ENCODE measurements at regions of chr2 and their contacts with region 1.

Region 1: DNA sequence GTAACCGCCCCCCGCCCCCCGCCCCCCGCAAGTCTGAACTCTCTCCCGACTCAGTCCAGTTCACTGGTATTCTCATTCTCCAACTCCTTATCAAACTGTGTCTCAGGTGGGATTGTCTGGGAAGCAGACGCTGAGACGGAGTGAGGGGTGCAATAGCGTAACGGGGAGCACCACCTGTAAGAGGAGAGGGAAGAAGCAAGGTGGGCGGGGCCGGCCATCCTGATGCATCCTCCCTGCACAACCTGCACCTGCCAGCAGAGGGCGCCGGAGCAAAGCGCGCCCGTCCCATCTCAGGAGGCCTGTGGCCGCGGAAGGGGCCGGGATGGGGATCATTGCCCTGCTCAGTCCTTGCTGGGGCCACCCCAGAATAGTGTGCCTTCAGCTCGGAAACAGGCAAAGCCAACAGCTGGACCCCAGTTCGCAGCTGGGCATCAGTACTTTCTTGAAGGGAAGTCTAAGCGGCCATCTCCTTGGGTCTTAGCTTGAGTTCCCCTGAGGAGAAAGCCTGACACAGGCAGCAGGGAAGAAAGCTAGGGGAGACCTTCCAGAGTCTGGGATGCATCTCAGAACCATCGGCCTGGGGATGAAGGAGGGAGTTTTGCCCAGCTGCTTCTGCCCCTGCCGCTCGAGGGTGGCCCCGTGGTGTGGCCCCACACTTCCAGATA is 208.0 kb downstream of the TFCP2L1 start:
- DNase-seq: no peak
- H3K4me3 ChIP-seq: no peak overlapping the region
- H3K27ac ChIP-seq: no peak overlapping the region
- H3K27me3 ChIP-seq: peaks cover 34% of the 10 kb centered on the region
- CTCF ChIP-seq: peak; percentile 83

Region 2: DNA sequence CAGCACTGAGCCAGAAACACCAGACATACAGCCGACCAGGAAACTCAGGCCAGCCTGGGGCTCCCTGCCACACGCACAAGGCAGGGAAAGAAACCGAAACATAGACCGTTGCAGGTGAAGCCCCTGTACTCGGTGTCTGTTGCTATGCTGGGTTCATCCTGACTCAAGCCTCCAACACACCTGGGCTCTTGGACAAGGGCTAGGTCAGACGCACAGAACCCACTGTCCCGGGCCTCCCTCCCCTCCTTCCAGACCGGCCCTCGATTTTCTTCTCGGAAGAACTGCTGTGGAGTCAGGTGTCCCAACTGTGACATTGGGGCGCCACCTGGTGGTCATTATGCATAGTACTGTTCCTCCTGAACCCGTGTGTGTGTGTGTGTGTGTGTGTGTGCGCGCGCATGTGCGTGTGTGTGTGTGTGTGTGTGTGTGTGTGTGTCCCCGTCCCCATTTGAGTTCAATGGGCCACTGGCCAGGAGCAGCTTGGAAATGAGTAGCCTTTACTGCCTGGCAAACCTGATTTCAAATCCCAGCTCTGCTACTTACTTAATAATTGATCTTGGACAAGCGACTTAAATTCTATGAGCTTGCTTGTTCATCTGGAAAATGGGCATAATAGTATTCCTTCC is 396.8 kb before region 1 on chr2:
- CTCF ChIA-PET with region 1: interaction called, 59 read pairs
- POLR2A ChIA-PET with region 1: interaction called, 16 read pairs
- DNase-seq: peak; percentile 70
- H3K4me3 ChIP-seq: no peak overlapping the region
- H3K27ac ChIP-seq: no peak overlapping the region
- H3K27me3 ChIP-seq: peaks cover 29% of the 10 kb centered on the region
- CTCF ChIP-seq: peak; percentile 74

Region 3: DNA sequence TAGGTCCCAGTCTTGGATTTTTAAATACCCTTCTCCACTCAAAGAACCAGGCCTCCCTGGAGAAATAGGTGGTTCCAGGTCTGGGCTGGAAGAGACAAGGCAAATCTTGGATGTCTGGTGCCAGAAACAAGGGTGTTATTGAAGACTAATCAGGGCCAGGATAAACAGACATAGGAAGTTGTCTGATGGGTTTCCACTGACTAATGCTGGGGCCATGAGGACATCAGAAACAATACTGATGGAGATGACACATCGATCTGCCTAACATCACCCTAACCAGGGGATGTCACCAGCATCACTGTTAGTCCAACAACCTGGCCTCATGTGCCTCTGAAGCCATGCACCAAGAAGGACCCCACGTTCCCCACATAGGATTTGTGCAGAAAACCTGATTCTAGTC is 383.9 kb before region 1 on chr2:
- CTCF ChIA-PET with region 1: interaction called, 223 read pairs
- POLR2A ChIA-PET with region 1: interaction called, 4 read pairs
- DNase-seq: no peak
- H3K4me3 ChIP-seq: no peak overlapping the region
- H3K27ac ChIP-seq: no peak overlapping the region
- H3K27me3 ChIP-seq: peaks cover 11% of the 10 kb centered on the region
- CTCF ChIP-seq: no peak

Region 4: DNA sequence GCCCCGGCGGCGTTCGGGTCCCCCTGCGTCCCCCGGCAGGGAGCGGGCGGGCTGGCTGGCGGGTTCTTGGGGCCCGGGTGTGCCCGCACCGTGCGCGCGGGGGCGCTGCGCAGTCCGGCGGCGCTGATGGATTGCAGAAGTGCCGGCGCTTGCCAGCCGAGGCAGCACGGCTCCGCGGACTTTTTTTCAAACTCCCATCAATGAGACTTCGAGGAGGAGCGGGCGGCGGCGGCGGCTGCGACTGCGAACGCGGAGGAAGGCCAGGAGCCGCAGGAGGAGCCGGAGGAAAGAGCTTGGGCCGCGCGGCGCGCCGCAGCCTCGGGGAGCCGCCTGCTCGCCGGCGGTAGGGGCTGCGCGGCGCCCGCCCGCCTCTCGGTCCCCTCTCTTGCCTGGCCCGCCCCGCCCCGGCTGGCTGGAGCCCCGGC is 341.3 kb before region 1 on chr2 and contains the start of gene GLI2:
- CTCF ChIA-PET with region 1: interaction called, 9 read pairs
- POLR2A ChIA-PET with region 1: interaction called, 11 read pairs
- DNase-seq: peak; percentile 55
- H3K4me3 ChIP-seq: peak within 1 kb of the TSS; percentile 84
- H3K27ac ChIP-seq: peak within 1 kb of the TSS; percentile 91
- H3K27me3 ChIP-seq: no peaks in the 10 kb centered on the region
- CTCF ChIP-seq: peak; percentile 56
- polyA plus RNA-seq, gene GLI2: 5.2 and 8.4 TPM in 2 replicates

Region 5: DNA sequence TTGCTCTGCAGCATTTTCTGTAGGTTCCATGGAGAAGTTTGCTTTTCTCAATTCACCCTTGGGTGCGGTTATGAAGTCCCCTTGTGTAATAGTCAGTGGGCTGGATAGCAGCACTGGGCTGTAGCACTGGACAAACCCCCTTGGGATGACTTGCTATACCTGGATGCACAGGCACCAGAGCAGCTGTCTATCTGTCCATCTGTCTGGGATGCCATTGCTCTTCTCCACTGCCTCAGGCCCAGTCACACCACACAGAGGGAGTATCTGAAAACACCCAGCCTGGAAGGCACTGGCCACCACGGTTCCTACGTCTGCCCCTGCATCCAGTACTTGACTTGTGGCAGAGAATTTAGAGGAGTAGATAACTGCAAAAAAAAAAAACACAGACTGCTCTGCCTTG is 46.5 kb before region 1 on chr2:
- CTCF ChIA-PET with region 1: no interaction called
- POLR2A ChIA-PET with region 1: no interaction called
- DNase-seq: no peak
- H3K4me3 ChIP-seq: no peak overlapping the region
- H3K27ac ChIP-seq: no peak overlapping the region
- H3K27me3 ChIP-seq: peaks cover 56% of the 10 kb centered on the region
- CTCF ChIP-seq: no peak

Measured in AG04450 (cell line).